ENCODE measurements at regions of chr1 and their contacts with region 1.

Region 1: DNA sequence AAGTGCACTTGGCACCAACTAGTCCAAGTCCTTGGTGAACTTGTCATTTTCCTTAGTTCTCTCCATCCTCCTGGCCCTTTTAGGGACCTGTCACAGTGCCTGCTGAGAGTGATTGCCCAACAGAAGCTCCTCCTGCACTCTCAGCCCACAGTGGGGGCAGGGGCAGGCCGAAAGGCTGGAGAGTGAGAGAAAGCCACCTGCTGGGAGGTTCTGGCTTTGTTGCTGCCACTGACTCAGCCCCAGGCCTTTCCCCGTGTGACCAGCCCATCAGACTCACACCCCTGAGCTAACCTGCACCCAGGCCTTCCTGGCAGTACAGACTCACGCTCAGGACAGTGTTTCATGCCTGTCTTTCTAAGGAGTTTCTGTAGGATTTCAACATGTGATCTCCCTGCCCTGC is 17.1 kb upstream of the PROK1 start:
- DNase-seq: peak; percentile 16 to 72 (median 47)
- ATAC-seq: peak; percentile 72 to 92 (median 91)
- H3K4me3 ChIP-seq: no peak overlapping the region
- H3K27ac ChIP-seq: peak overlapping the region in 1 of 12 donors; percentile 28
- H3K4me1 ChIP-seq: peaks cover 0 to 18% (median 0%) of the 10 kb centered on the region in 12 donors
- H3K27me3 ChIP-seq: no peaks in the 10 kb centered on the region
- CTCF ChIP-seq: peak in 4 of 12 donors; percentile 11 to 23 (median 18)
- POLR2A ChIP-seq: peak in 1 of 2 donors; percentile 18

Region 2: DNA sequence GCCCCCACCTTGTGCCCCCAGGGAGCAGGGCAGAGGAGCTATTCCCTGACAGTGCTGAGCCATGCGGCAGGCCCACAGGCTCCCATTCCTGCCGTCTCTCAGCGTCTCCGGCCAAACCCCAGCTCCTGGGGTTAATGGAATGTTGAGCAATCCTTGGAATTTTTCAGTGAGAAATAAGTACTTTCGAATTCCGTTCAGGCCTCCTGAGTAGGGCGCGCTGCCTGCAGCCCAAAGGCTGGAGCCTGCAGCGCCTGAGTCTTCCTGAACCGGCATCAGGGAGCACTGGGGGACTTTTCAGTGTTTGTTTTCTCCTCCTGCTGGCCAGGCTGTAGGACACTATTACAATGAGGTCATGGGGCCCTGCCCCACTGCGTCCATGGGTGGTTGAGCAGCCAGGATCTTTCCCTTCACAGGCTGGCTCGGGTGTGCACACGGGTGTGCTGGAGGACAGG is 556.5 kb before region 1 on chr1:
- intact Hi-C with region 1: no loop called
- DNase-seq: peak; percentile 57 to 84 (median 65)
- ATAC-seq: peak; percentile 65 to 94 (median 90)
- H3K4me3 ChIP-seq: peak overlapping the region in 2 of 12 donors; percentile 2 to 13
- H3K27ac ChIP-seq: peak overlapping the region; percentile 62 to 86 (median 80)
- H3K4me1 ChIP-seq: peaks cover 0 to 50% (median 20%) of the 10 kb centered on the region in 12 donors
- H3K27me3 ChIP-seq: no peaks in the 10 kb centered on the region
- CTCF ChIP-seq: peak in 8 of 12 donors; percentile 8 to 44 (median 25)
- POLR2A ChIP-seq: no peak

Region 3: DNA sequence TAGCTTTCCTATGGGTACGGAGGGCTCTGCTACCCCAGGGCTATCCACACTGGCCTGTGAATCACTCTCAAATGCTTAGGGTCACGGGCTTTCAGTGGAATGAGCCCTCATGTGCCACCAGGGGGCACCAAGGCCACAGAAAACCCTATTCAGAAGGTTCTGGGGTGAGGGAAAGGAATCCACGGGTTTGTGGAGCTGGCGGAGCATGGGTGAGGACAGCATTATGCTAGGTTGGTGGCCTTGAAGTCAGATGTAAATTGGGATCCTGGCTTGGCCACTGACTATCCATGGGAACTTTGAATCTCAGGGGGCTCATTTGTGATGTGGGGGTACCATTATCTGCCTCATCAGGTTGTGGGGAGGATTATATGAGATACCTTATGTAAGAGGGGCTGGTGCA is 21.2 kb before region 1 on chr1:
- intact Hi-C with region 1: loop called in 1 of 10 experiments (anchors 2 kb)
- DNase-seq: peak; percentile 42 to 80 (median 70)
- ATAC-seq: peak; percentile 40 to 76 (median 58)
- H3K4me3 ChIP-seq: no peak overlapping the region
- H3K27ac ChIP-seq: no peak overlapping the region
- H3K4me1 ChIP-seq: peaks cover 0 to 34% (median 16%) of the 10 kb centered on the region in 12 donors
- H3K27me3 ChIP-seq: no peaks in the 10 kb centered on the region
- CTCF ChIP-seq: peak; percentile 61 to 83 (median 75)
- POLR2A ChIP-seq: no peak

Measured in heart left ventricle (tissue), 16 donors.